GM10248 (cell line): ENCODE measurements at regions of chr7 and their contacts with region 1.

Region 1: DNA sequence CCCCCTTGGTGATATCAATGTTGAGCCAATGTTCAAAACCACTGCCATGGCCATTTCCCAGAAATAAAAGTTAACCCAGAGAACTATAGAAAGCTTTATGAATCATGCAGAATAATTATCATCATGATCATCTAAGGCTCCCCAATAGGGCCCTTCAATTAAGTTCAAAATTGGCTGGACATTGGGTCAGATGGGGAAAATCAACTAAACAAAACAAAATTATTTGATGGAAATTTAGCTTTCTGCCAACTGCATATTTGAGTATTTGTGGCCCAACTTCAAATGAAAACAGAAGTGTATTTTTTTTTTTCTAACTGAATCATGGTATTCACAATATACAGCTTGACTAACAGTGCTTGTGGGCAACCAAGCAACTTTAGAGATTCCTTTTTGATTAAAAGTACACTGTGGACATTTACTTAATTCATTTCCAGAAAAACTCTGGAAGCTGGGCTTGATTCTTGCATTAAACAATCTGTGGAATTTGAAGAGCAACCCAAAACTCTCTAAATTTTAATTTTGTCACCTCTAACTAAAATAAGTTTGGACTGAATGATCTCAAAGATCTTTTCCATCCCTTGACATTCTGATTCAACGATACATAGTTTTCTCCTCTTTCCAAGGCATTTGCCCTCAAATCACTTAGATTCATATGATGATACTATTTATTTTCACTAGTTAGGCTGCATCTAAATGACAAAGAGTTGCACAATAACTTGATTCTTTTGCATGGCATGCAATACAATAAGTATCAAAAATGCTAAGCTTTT is 203.2 kb downstream of the AHR start:
- DNase-seq: no peak
- CTCF ChIP-seq: no peak

Region 2: GRCh38 chr7:17488829-17489228 is 12.8 kb before region 1 on chr7:
- CTCF ChIA-PET with region 1: interaction called, 13 read pairs
- POLR2A ChIA-PET with region 1: no interaction called
- DNase-seq: no peak
- CTCF ChIP-seq: no peak

Region 3: DNA sequence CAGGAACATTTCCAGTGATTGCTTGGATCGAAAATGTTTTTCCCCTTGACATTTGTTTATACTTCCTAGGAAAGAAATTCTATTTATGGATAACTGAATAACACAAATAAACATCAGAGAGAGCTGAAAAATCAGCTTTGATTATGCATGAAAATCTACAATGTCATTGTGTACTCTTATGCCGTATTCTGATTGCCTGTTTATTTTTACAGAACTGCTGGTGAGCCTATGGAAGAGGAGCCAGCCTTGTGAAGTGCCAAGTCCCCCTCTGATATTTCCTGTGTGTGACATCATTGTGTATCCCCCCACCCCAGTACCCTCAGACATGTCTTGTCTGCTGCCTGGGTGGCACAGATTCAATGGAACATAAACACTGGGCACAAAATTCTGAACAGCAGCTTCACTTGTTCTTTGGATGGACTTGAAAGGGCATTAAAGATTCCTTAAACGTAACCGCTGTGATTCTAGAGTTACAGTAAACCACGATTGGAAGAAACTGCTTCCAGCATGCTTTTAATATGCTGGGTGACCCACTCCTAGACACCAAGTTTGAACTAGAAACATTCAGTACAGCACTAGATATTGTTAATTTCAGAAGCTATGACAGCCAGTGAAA is 1494.3 kb after region 1 on chr7:
- CTCF ChIA-PET with region 1: no interaction called
- POLR2A ChIA-PET with region 1: no interaction called
- DNase-seq: no peak
- CTCF ChIP-seq: no peak